B cell (primary cell): ENCODE measurements at regions of chr9 and their contacts with region 1.

Region 1: DNA sequence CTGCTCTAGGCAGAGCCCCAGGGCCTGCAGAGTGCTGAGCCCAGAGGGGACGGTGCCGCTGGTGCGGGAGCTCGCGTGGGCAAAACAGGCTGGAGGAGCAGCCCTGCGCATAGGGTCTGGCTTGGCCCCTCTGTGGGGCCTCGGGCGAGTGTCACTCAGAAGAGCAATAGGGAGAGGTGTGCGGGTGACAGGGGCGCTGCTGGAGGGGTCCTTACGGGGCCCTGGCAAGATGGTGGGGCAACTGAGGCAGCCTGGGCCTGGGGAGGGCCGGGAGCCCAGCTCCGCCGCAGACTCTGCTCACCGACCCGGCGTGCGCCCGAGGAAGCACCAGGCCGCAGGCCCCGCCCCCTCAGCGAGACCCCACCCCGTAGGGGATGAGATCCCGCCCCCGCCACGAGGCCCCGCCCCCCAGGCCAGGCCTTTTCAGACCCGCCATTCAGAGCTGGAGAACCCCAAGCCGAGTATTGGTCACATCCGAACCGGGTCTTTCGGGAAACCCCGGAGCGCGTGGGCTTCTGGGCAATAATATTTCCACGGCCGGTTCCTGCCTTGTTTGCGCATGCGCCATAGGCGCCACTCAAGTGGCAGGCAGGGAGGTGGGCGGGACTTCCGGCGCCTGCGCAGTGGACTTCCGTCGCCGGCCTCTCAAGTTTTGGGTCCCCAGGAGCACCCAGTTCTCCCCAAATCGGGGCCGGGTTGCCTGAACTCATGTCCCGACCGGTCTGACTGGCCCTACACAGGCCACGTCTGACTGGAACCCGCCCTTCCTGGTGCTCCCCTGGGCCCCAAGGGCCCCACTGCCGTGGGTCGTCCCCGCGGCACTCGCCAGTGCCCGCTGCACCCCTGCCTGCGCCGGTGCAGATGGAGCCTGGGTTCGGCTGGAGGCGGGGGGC is 1.3 kb upstream of the RNF208 start:
- DNase-seq: peak; percentile 99
- ATAC-seq: peak; percentile 92
- H3K4me3 ChIP-seq: peak overlapping the region; percentile 36 to 77 (median 71)
- H3K4me3 Mint-ChIP-seq: peak overlapping the region; percentile 86
- H3K27ac ChIP-seq: peak overlapping the region; percentile 79 to 91
- H3K27ac Mint-ChIP-seq: peak overlapping the region; percentile 82
- H3K4me1 ChIP-seq: peaks cover 13 to 32% of the 10 kb centered on the region in 2 donors
- H3K4me1 Mint-ChIP-seq: peaks cover 16% of the 10 kb centered on the region
- H3K27me3 ChIP-seq: peaks cover 0 to 12% (median 0%) of the 10 kb centered on the region in 4 experiments
- H3K27me3 Mint-ChIP-seq: peaks cover 4% of the 10 kb centered on the region
- CTCF ChIP-seq: no peak

Region 2: DNA sequence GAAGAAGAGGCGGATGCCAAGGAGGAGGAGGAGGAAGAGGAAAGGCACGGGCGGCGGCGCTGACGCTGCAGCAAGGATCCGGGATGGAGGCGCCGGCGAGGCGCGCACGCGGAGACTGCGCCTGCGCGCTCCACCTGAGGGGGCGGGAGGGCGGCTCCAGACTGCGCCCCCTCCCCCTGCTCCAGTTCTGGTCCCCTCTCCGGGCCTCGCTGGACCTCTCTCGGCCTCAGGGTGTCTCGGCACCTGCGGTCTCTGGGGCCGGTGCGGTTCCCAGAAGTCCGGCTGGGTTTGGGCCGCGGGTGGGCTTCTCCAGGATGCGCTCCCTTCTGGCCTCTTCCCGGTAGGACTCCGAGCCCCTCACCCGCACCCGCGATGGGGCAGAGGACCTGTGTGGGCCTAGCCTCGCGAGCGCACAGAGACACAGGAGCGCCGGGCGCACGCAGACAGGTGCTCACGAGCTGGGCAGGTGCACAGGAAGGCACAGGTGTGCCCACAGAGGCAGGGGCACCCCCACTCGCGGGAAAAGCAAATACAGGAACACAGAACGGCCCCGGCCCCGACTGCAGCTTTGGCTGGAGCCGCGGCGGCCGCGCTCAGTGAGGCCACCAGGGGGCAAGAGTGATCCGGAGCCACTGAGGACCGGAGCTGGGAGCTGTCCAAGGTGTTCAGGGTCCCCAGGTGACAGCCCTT is 177.1 kb before region 1 on chr9 and contains the start of gene NPDC1:
- CTCF ChIA-PET with region 1: interaction called, 12 read pairs
- POLR2A ChIA-PET with region 1: interaction called, 5 read pairs
- intact Hi-C with region 1: no loop called
- DNase-seq: peak; percentile 89
- ATAC-seq: peak; percentile 96
- H3K4me3 ChIP-seq: peak within 1 kb of the TSS in 3 of 5 experiments; percentile 18 to 46 (median 23)
- H3K4me3 Mint-ChIP-seq: peak within 1 kb of the TSS; percentile 47
- H3K27ac ChIP-seq: no peak within 1 kb of the TSS
- H3K27ac Mint-ChIP-seq: peak within 1 kb of the TSS; percentile 15
- H3K4me1 ChIP-seq: peaks cover 24 to 42% of the 10 kb centered on the region in 2 donors
- H3K4me1 Mint-ChIP-seq: peaks cover 10% of the 10 kb centered on the region
- H3K27me3 ChIP-seq: peaks cover 0 to 86% (median 53%) of the 10 kb centered on the region in 4 experiments
- H3K27me3 Mint-ChIP-seq: peaks cover 17% of the 10 kb centered on the region
- CTCF ChIP-seq: peak; percentile 87
- total RNA-seq, gene NPDC1: 0.17 and 0.39 TPM in 2 replicates

Region 3: DNA sequence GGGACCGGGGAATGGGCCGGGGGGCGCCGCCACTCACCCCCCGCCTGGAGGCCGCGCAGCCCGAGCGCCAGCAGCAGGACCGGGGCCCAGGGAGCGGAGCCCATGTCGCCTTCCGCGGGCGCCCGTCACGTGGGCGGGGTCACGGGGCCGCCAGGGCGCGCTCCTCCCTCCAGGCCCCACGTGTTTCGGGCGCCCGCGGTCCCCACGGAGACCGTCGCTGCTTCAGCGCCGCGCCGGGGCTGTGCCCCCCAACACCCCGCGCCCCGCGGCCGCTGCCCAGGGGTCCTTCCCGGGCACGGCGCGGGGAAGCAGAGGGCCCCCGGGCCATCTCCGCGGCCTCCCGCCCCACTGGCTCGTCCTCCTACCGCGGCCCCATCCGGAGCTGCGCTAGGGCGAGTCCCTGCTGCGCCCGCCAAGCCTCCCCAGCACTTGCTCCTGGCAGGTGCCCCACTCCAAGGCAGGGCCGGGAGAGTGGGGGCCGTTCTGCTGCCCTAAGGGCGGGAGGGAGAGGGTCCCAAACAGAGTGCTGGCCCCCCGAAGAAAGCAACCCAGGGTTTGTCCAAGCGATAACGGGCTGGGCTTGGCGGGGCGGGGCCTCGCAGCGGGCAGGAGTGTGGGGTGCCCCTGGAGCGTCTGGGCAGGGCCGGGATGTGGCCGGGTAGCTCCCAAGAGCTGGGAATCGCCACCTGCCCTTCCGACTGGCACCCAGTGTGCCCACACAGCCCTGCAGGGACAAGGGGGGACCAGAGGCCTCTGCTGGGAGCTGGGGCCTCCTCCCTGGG is 108.5 kb before region 1 on chr9 and contains the start of gene DPP7:
- CTCF ChIA-PET with region 1: interaction called, 15 read pairs
- POLR2A ChIA-PET with region 1: interaction called, 6 read pairs
- intact Hi-C with region 1: loop called (anchors 1 kb)
- DNase-seq: peak; percentile 90
- ATAC-seq: peak; percentile 90
- H3K4me3 ChIP-seq: peak within 1 kb of the TSS; percentile 11 to 79 (median 60)
- H3K4me3 Mint-ChIP-seq: peak within 1 kb of the TSS; percentile 81
- H3K27ac ChIP-seq: peak within 1 kb of the TSS; percentile 55 to 83
- H3K27ac Mint-ChIP-seq: peak within 1 kb of the TSS; percentile 50
- H3K4me1 ChIP-seq: peaks cover 17 to 28% of the 10 kb centered on the region in 2 donors
- H3K4me1 Mint-ChIP-seq: peaks cover 20% of the 10 kb centered on the region
- H3K27me3 ChIP-seq: no peaks in the 10 kb centered on the region
- H3K27me3 Mint-ChIP-seq: no peaks in the 10 kb centered on the region
- CTCF ChIP-seq: no peak
- total RNA-seq, gene DPP7: 324 and 335 TPM in 2 replicates

Region 4: GRCh38 chr9:137188490-137189296 is 34.6 kb before region 1 on chr9 and contains the starts of genes ANAPC2 and SSNA1:
- CTCF ChIA-PET with region 1: interaction called, 42 read pairs
- POLR2A ChIA-PET with region 1: interaction called, 7 read pairs
- intact Hi-C with region 1: loop called (anchors 1 kb)
- DNase-seq: peak; percentile 97
- ATAC-seq: peak; percentile 84
- H3K4me3 ChIP-seq: peak within 1 kb of the TSS; percentile 50 to 99 (median 98)
- H3K4me3 Mint-ChIP-seq: peak within 1 kb of the TSS; percentile 96
- H3K27ac ChIP-seq: peak within 1 kb of the TSS; percentile 78 to 90
- H3K27ac Mint-ChIP-seq: peak within 1 kb of the TSS; percentile 97
- H3K4me1 ChIP-seq: peaks cover 26 to 40% of the 10 kb centered on the region in 2 donors
- H3K4me1 Mint-ChIP-seq: peaks cover 36% of the 10 kb centered on the region
- H3K27me3 ChIP-seq: no peaks in the 10 kb centered on the region
- H3K27me3 Mint-ChIP-seq: no peaks in the 10 kb centered on the region
- CTCF ChIP-seq: peak; percentile 49
- total RNA-seq, gene ANAPC2: 121 and 129 TPM in 2 replicates
- total RNA-seq, gene SSNA1: 52.9 and 53.6 TPM in 2 replicates

Region 5: GRCh38 chr9:137240861-137241489 is 17.7 kb after region 1 on chr9 and contains the start of gene TUBB4B:
- CTCF ChIA-PET with region 1: interaction called, 76 read pairs
- POLR2A ChIA-PET with region 1: interaction called, 11 read pairs
- intact Hi-C with region 1: loop called (anchors 1 kb)
- DNase-seq: peak; percentile 100
- ATAC-seq: peak; percentile 74
- H3K4me3 ChIP-seq: peak within 1 kb of the TSS; percentile 50 to 84 (median 75)
- H3K4me3 Mint-ChIP-seq: peak within 1 kb of the TSS; percentile 92
- H3K27ac ChIP-seq: peak within 1 kb of the TSS; percentile 83 to 90
- H3K27ac Mint-ChIP-seq: peak within 1 kb of the TSS; percentile 97
- H3K4me1 ChIP-seq: peaks cover 29 to 53% of the 10 kb centered on the region in 2 donors
- H3K4me1 Mint-ChIP-seq: peaks cover 42% of the 10 kb centered on the region
- H3K27me3 ChIP-seq: no peaks in the 10 kb centered on the region
- H3K27me3 Mint-ChIP-seq: no peaks in the 10 kb centered on the region
- CTCF ChIP-seq: no peak
- total RNA-seq, gene TUBB4B: 110 and 111 TPM in 2 replicates